Dorsolateral prefrontal cortex (tissue), 120 donors: ENCODE measurements at regions of chr17 and their contacts with region 1.

Region 1: GRCh38 chr17:44919885-44920564 is 4.7 kb upstream of the GFAP start:
- DNase-seq: peak; percentile 64 to 89 (median 86)
- H3K4me3 ChIP-seq: no peak overlapping the region
- H3K27ac ChIP-seq: peak overlapping the region in 26 of 59 donors; percentile 0 to 71 (median 30)
- H3K27me3 ChIP-seq: peaks cover 0 to 31% (median 0%) of the 10 kb centered on the region in 45 donors
- CTCF ChIP-seq: peak in 55 of 56 donors; percentile 70 to 94 (median 85)

Region 2: GRCh38 chr17:44677136-44677535 is 242.9 kb before region 1 on chr17:
- intact Hi-C with region 1: no loop called
- DNase-seq: no peak
- H3K4me3 ChIP-seq: no peak overlapping the region
- H3K27ac ChIP-seq: no peak overlapping the region
- H3K27me3 ChIP-seq: no peaks in the 10 kb centered on the region
- CTCF ChIP-seq: no peak

Region 3: GRCh38 chr17:44708401-44709181 is 211.4 kb before region 1 on chr17 and contains the start of gene DBF4B:
- intact Hi-C with region 1: no loop called
- DNase-seq: peak; percentile 60 to 86 (median 81)
- H3K4me3 ChIP-seq: peak within 1 kb of the TSS; percentile 47 to 95 (median 84)
- H3K27ac ChIP-seq: peak within 1 kb of the TSS in 57 of 59 donors; percentile 16 to 96 (median 82)
- H3K27me3 ChIP-seq: no peaks in the 10 kb centered on the region
- CTCF ChIP-seq: peak in 28 of 56 donors; percentile 9 to 58 (median 30)
- total RNA-seq, gene DBF4B: 11.7 to 42.8 (median 23.1) TPM

Region 4: GRCh38 chr17:45098869-45099616 is 179.0 kb after region 1 on chr17:
- intact Hi-C with region 1: loop called in 1 of 2 experiments (anchors 2 kb)
- DNase-seq: peak; percentile 78 to 96 (median 86)
- H3K4me3 ChIP-seq: peak overlapping the region in 3 of 59 donors; percentile 8 to 15 (median 11)
- H3K27ac ChIP-seq: peak overlapping the region in 56 of 59 donors; percentile 11 to 90 (median 77)
- H3K27me3 ChIP-seq: no peaks in the 10 kb centered on the region
- CTCF ChIP-seq: peak; percentile 51 to 90 (median 81)

Region 5: DNA sequence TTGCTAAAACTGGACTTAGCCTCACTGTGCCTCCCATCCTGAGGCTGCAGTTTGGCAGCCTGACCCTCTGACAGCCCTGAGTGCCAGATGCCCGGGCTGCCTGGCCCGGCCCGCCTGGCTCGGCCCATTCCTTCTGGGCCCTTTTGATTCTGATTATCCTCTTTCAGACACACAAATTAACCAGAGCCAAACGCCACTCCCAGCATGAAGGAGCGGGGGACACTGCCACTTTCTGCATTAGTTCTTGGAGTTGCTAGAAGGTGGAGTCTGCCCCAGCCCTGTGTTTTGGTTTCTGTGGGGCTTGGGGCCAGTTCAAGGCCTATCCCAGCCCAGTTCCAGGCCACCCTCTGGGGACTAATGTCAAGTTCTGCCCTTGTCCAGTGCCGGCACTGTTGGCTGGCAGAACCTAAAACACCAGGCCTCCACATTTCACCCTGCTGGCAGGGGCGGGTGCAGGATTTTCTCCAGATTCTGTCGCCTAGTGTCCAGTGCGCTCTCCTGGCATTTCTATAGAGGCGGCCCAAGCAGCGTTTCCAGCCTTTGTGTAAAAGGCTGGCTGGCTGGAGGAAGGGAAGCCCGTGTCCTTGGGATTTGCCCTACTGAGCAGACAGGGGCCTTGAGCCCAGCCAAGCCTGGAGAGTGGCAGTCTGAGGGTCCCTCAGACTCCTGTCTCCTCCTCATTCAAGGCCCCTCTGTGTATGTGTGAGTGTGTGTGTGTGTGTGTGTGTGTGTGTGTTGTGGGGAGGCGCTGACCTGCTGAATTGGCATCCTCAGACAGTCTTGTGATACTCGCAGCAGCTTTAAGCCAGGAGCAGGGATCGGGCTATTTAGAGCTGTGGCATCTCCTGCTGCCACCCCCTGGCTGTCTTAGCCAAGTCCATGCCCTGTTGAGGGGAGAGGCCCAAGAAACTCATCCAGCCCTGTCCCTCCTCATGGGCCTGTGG is 190.9 kb after region 1 on chr17:
- intact Hi-C with region 1: loop called in 1 of 2 experiments (anchors 5 kb)
- DNase-seq: peak in 7 of 10 donors; percentile 40 to 66 (median 56)
- H3K4me3 ChIP-seq: no peak overlapping the region
- H3K27ac ChIP-seq: peak overlapping the region in 56 of 59 donors; percentile 13 to 86 (median 70)
- H3K27me3 ChIP-seq: no peaks in the 10 kb centered on the region
- CTCF ChIP-seq: peak in 2 of 56 donors; percentile 24 to 28

Region 6: DNA sequence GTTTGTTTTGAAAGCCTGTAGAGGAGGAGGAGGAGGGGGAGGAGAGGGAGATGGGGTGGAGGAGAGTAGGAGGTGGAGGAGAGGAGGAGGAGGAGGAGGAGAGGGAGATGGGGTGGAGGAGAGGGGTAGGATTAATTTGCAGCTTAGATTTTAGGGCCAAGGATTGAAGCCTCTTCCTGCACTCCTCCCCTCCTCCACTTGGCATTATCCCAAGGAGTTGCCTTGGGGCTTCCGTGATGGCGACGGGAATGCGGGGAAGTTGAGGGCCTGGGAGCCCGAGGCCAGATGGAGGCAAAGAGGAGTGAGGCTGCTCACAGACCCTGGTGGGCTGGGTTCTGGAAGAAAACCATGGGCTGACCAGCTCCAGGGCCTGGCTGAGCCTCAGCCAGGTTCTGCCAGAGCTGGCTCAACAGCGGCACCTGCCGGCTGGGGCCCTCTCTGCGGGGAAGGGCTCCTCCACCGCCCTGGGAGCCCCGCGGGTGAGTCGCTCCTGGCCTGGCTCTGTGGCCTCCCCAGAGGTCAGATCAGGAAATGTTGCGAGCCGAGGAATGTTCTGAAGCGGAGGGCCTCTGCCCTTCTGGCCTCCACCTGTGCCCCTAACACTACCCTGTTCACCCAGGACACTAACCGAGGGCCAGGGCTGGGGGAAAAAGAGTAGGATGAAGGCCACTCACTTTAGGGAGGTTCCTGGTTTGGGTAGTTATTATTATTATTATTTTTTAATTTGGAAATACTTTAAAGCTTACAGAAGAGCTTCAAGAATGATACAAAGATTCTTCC is 277.7 kb after region 1 on chr17:
- intact Hi-C with region 1: loop called in 1 of 2 experiments (anchors 10 kb)
- DNase-seq: peak; percentile 80 to 92 (median 86)
- H3K4me3 ChIP-seq: peak overlapping the region in 26 of 59 donors; percentile 0 to 43 (median 29)
- H3K27ac ChIP-seq: peak overlapping the region in 47 of 59 donors; percentile 2 to 77 (median 50)
- H3K27me3 ChIP-seq: no peaks in the 10 kb centered on the region
- CTCF ChIP-seq: peak; percentile 93 to 100 (median 99)